Right ventricle myocardium inferior (tissue), 1 donor: ENCODE measurements at regions of chr3 and their contacts with region 1.

Region 1: DNA sequence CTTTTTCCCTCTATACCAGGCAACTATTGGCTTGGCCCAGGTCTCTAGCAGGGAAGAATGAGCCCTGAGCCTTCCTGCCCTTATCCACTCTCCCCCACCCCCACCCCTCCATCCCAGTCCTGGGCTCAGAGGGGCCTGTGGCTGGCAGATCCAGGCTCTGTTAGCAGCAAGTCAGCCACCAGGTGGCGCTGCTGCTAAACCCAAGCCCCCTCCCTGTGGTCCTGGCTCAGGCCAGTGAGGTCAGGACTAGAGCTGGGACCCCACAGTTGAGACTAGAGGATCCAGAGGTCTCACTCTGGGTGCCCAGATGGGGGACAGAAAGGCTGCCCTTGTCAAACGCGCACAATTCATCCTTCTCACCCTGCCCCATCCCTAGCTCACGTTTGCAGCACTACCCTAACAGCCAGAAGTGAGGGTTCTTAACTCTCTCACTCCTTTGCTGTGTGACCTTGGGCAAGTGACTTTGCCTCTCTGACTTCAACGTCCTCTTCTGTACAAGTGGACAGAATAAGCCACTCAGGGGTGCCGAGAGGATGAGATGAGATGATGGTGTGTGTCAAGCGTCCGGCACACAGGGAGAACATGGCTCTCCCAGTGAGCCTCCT is 46.8 kb upstream of the SLC6A1 start:
- DNase-seq: peak; percentile 85
- ATAC-seq: peak; percentile 71

Region 2: DNA sequence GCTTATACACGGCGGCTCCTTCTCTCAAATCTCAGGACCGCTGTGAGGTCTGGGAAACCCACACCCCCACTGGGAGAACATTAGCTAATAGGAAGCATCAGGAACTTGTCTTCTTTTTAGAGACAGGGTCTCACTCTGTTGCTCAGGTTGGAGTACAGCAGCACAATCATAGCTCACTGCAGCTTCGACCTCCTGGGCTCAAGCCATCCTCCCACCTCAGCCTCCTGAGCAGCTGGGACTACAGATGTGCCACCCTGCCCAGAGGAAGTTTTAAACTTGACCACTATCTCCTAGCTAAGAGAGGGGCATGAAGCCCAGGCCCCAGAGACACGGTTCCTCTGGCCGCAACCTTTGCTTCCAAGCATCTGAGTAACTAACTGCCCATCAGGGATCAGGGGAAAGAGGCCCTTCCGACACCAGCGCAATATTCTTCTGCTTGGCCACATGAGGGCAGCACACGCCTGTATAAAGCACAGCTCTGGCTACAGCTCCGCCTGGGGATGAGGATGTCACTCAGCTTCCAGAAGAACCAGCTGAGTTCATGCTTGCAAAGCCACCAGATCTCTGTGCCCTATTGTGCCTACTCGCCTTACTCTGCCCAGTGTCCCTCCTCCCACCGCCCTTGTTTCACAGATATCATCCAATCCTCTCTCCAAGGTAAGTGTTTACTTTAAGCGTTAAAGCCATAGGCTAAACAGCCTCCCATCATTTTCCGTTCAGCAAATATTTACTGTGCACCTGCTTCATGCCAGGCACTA is 187.3 kb before region 1 on chr3:
- intact Hi-C with region 1: loop called (anchors 10 kb)
- DNase-seq: no peak
- ATAC-seq: peak; percentile 76

Region 3: GRCh38 chr3:10876661-10877060 is 69.1 kb before region 1 on chr3:
- intact Hi-C with region 1: no loop called
- DNase-seq: no peak
- ATAC-seq: no peak

Region 4: GRCh38 chr3:10983219-10983916 is 37.6 kb after region 1 on chr3:
- intact Hi-C with region 1: loop called (anchors 5 kb)
- DNase-seq: no peak
- ATAC-seq: no peak

Region 5: GRCh38 chr3:11060500-11061251 is 114.9 kb after region 1 on chr3:
- intact Hi-C with region 1: loop called (anchors 1 kb)
- DNase-seq: peak; percentile 84
- ATAC-seq: peak; percentile 66

Region 6: DNA sequence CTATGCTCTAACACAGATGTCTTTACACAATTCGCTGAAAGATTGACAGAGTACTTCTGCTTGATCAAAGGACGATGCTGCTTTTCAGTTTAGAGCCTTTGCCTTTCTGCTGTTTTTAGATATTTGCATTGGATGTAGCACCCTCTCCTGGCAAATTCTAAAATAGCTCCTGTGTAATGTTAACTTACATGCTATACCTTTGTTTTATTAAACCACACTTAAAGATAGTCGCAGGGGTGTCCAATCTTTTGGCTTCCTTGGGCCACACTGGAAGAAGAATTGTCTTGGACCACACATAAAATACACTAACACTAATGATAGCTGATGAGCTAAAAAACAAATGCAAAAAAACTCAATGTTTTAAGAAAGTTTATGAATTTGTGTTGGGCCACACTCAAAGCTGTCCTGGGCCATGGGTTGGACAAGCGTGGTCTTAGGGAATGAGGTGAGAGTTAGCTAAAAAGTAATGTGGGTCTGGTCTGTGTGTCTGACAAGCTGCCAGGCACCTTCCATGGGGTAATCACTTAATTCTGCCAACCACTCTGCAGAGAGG is 389.3 kb after region 1 on chr3:
- intact Hi-C with region 1: loop called (anchors 10 kb)
- DNase-seq: no peak
- ATAC-seq: peak; percentile 67